Heart right ventricle (tissue), 16 donors: ENCODE measurements at regions of chr17 and their contacts with region 1.

Region 1: GRCh38 chr17:79045842-79046196 is 21.9 kb downstream of the C1QTNF1 start:
- DNase-seq: peak; percentile 72 to 80
- ATAC-seq: peak; percentile 27 to 86 (median 69)
- H3K4me3 ChIP-seq: peak overlapping the region in 3 of 10 donors; percentile 16 to 22 (median 20)
- H3K27ac ChIP-seq: peak overlapping the region in 9 of 10 donors; percentile 33 to 84 (median 69)
- H3K4me1 ChIP-seq: peaks cover 15 to 48% (median 32%) of the 10 kb centered on the region in 9 donors
- H3K27me3 ChIP-seq: no peaks in the 10 kb centered on the region
- CTCF ChIP-seq: peak; percentile 93 to 98 (median 96)

Region 2: GRCh38 chr17:78993241-78993956 is 52.4 kb before region 1 on chr17:
- intact Hi-C with region 1: loop called in 1 of 10 experiments (anchors 10 kb)
- DNase-seq: peak; percentile 36 to 53
- ATAC-seq: peak in 6 of 8 donors; percentile 43 to 59 (median 50)
- H3K4me3 ChIP-seq: no peak overlapping the region
- H3K27ac ChIP-seq: peak overlapping the region in 2 of 10 donors; percentile 3 to 35
- H3K4me1 ChIP-seq: peaks cover 4 to 35% (median 15%) of the 10 kb centered on the region in 9 donors
- H3K27me3 ChIP-seq: no peaks in the 10 kb centered on the region
- CTCF ChIP-seq: peak; percentile 62 to 88 (median 78)

Region 3: GRCh38 chr17:79019632-79020584 is 25.9 kb before region 1 on chr17:
- intact Hi-C with region 1: loop called in 4 of 10 experiments (anchors 2 kb)
- DNase-seq: peak; percentile 65 to 79
- ATAC-seq: peak; percentile 9 to 60 (median 38)
- H3K4me3 ChIP-seq: peak overlapping the region in 3 of 10 donors; percentile 2 to 20 (median 4)
- H3K27ac ChIP-seq: peak overlapping the region; percentile 52 to 95 (median 90)
- H3K4me1 ChIP-seq: peaks cover 24 to 57% (median 52%) of the 10 kb centered on the region in 9 donors
- H3K27me3 ChIP-seq: peaks cover 0 to 42% (median 0%) of the 10 kb centered on the region in 7 donors
- CTCF ChIP-seq: peak; percentile 53 to 85 (median 81)

Region 4: DNA sequence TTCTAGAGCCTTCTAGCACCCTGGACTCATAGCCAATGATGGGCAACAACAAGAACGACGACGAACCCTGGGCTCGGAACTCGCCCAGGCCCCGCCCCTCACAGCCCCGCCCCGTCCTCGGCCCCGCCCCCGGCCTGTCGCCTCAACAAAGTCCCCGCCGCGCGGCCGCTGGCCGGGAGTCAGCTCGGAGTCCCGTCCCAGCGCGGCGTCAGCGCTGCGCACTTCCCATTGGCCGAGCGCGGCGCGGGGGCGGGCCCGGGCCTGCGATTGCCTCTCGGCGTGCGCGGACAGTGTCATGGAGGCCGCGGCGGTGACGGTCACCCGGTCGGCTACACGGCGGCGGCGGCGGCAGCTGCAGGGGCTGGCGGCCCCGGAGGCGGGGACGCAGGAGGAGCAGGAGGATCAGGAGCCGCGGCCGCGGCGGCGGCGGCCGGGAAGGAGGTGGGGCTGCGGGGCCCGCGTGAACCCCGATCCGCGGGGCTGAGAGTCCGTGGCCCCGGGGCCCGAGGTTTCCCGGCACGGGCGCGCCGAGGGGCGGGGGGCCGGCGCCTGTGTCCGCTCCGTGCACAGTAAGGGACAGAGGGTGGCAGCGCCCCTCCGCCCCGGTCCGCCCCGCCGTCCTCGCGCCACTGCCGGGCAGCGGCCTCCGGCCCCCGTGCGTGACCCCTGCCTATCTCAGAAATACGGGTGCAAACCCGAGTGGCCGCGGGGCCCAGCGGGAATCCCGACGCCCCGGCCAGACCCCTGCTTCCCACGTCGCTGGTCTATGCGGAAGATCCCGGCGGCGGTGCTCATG is 29.0 kb after region 1 on chr17 and contains the start of gene ENGASE:
- intact Hi-C with region 1: loop called in 6 of 10 experiments (anchors 2 to 5 kb)
- DNase-seq: peak; percentile 93 to 97
- ATAC-seq: peak; percentile 96 to 99 (median 98)
- H3K4me3 ChIP-seq: peak within 1 kb of the TSS; percentile 70 to 92 (median 82)
- H3K27ac ChIP-seq: peak within 1 kb of the TSS; percentile 76 to 94 (median 89)
- H3K4me1 ChIP-seq: peaks cover 6 to 29% (median 12%) of the 10 kb centered on the region in 9 donors
- H3K27me3 ChIP-seq: no peaks in the 10 kb centered on the region
- CTCF ChIP-seq: no peak
- total RNA-seq, gene ENGASE: 20.1 to 45.5 (median 26.6) TPM

Region 5: DNA sequence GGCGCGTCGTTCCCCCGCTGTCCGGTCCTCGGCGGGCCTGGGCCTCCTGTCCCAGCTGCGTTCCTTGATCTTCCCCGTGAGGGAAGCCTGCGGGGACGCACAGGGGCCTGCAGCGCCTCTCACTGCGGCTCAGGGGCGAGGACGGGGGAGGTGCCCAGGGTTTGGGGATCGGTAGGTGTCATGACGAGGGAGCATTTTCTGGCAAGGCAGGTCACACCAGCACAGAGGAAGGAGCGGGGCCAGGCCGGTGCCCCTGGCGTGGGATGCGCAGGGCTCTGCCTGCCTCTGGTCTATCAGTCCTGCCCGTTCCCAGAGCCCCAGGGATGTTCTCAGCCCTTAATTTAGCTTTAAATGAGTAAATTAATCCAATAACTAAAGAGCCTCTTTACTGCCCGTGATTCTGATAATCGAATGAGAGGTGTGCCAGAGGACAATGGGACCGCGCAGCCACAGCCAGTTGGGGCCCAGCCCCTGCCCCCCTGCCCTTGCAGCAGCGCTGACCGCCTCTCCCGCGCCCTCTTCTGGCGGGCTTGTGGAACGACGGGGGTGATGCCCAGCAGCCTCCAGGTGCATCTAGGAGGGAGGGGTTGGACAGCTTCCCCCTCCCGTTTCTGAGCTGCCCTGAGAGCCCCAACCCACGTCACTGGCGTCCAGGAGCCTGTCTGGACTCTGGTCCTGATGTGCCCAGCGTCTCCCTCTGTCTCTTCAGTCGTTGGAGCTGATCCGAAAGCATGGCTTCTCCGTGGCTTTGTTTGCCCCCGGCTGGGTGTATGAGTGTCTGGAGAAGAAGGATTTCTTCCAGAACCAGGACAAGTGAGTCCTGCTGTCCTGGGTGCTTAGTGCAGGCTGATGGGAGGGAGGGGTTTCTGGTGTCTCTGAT is 36.7 kb after region 1 on chr17:
- intact Hi-C with region 1: loop called in 5 of 10 experiments (anchors 5 kb)
- DNase-seq: peak; percentile 46 to 52
- ATAC-seq: peak in 7 of 8 donors; percentile 21 to 71 (median 46)
- H3K4me3 ChIP-seq: no peak overlapping the region
- H3K27ac ChIP-seq: no peak overlapping the region
- H3K4me1 ChIP-seq: peaks cover 0 to 21% (median 10%) of the 10 kb centered on the region in 9 donors
- H3K27me3 ChIP-seq: no peaks in the 10 kb centered on the region
- CTCF ChIP-seq: peak; percentile 67 to 88 (median 83)